PC-9 (cell line): ENCODE measurements at regions of chr3 and their contacts with region 1.

Region 1: GRCh38 chr3:42443819-42444436 is 33.5 kb upstream of the LYZL4 start:
- DNase-seq: peak; percentile 59 to 83
- H3K4me3 ChIP-seq: no peak overlapping the region
- H3K27ac ChIP-seq: no peak overlapping the region
- H3K4me1 ChIP-seq: no peaks in the 10 kb centered on the region
- H3K27me3 ChIP-seq: no peaks in the 10 kb centered on the region
- CTCF ChIP-seq: peak; percentile 94

Region 2: GRCh38 chr3:42229942-42230688 is 213.8 kb before region 1 on chr3:
- CTCF ChIA-PET with region 1: interaction called, 5 read pairs
- POLR2A ChIA-PET with region 1: no interaction called
- intact Hi-C with region 1: loop called (anchors 1 kb)
- DNase-seq: peak; percentile 30 to 42
- H3K4me3 ChIP-seq: no peak overlapping the region
- H3K27ac ChIP-seq: no peak overlapping the region
- H3K4me1 ChIP-seq: no peaks in the 10 kb centered on the region
- H3K27me3 ChIP-seq: no peaks in the 10 kb centered on the region
- CTCF ChIP-seq: peak; percentile 71

Region 3: DNA sequence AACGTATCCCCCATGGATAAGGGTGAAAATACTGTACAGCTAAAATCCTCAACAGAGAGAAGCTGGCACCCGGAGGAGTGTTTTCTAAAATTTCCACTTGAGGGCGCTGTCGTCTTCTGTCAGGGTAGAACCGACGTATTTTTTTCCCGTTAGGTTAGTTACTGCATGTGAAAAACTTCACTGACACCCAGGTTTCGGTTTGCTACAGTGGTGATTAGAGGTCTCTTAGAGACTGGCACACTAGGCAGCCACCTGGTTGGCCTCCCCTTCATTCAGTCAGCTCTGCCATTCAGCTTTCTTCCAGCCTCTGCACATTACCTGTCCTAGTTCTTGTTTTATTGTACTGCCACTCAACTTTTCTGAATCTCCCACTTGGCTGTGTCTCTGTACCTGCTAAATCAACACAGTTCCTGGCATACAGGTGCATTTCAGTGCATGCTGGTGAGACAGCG is 196.3 kb before region 1 on chr3:
- CTCF ChIA-PET with region 1: interaction called, 3 read pairs
- POLR2A ChIA-PET with region 1: no interaction called
- intact Hi-C with region 1: loop called (anchors 1 kb)
- DNase-seq: peak; percentile 53 to 64
- H3K4me3 ChIP-seq: no peak overlapping the region
- H3K27ac ChIP-seq: no peak overlapping the region
- H3K4me1 ChIP-seq: no peaks in the 10 kb centered on the region
- H3K27me3 ChIP-seq: 0 out of 2 replicates have a peak, but pooled peaks cover 7% of the 10 kb centered on the region
- CTCF ChIP-seq: peak; percentile 86

Region 4: GRCh38 chr3:42539869-42540714 is 96.2 kb after region 1 on chr3:
- CTCF ChIA-PET with region 1: no interaction called
- POLR2A ChIA-PET with region 1: no interaction called
- intact Hi-C with region 1: loop called (anchors 1 kb)
- DNase-seq: peak; percentile 50 to 71
- H3K4me3 ChIP-seq: no peak overlapping the region
- H3K27ac ChIP-seq: no peak overlapping the region
- H3K4me1 ChIP-seq: 0 out of 2 replicates have a peak, but pooled peaks cover 9% of the 10 kb centered on the region
- H3K27me3 ChIP-seq: no peaks in the 10 kb centered on the region
- CTCF ChIP-seq: peak; percentile 82

Region 5: DNA sequence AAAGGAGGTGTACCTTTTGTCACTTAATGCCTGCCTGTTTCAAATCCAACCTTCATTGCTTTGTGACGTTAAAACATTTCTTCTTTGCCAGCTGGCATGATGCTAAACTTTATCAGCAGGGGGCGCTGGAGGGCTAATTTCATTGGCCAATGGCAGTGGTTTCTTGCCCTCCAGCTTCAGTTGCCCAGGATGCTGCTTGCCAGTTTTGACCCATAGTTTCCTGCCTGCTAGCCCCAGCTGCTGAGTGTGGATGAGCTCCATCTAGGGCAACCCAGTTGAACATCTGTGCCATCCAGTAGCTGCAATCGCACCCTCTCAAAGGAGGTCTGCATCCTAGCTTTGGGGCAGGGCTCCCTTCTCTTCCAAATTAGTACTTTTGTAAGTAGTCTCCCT is 387.4 kb after region 1 on chr3:
- CTCF ChIA-PET with region 1: no interaction called
- POLR2A ChIA-PET with region 1: no interaction called
- intact Hi-C with region 1: loop called (anchors 2 kb)
- DNase-seq: peak in 1 of 2 experiments; percentile 46
- H3K4me3 ChIP-seq: no peak overlapping the region
- H3K27ac ChIP-seq: no peak overlapping the region
- H3K4me1 ChIP-seq: peaks cover 58% of the 10 kb centered on the region
- H3K27me3 ChIP-seq: no peaks in the 10 kb centered on the region
- CTCF ChIP-seq: peak; percentile 74